ENCODE measurements at regions of chr22 and their contacts with region 1.

Region 1: GRCh38 chr22:41436322-41437113 is 10.1 kb downstream of the TOB2 start:
- DNase-seq: no peak
- H3K4me3 Mint-ChIP-seq: no peak overlapping the region
- H3K27ac Mint-ChIP-seq: peak overlapping the region; percentile 16
- H3K4me1 Mint-ChIP-seq: peaks cover 7% of the 10 kb centered on the region
- H3K27me3 Mint-ChIP-seq: no peaks in the 10 kb centered on the region

Region 2: GRCh38 chr22:41425660-41426365 is 10.7 kb before region 1 on chr22:
- CTCF ChIA-PET with region 1: interaction called, 7 read pairs
- POLR2A ChIA-PET with region 1: interaction called, 11 read pairs
- DNase-seq: peak; percentile 77
- H3K4me3 Mint-ChIP-seq: peak overlapping the region; percentile 14
- H3K27ac Mint-ChIP-seq: peak overlapping the region; percentile 82
- H3K4me1 Mint-ChIP-seq: peaks cover 14% of the 10 kb centered on the region
- H3K27me3 Mint-ChIP-seq: no peaks in the 10 kb centered on the region

Region 3: GRCh38 chr22:41902932-41903421 is 466.5 kb after region 1 on chr22:
- CTCF ChIA-PET with region 1: no interaction called
- POLR2A ChIA-PET with region 1: no interaction called
- DNase-seq: no peak
- H3K4me3 Mint-ChIP-seq: no peak overlapping the region
- H3K27ac Mint-ChIP-seq: no peak overlapping the region
- H3K4me1 Mint-ChIP-seq: peaks cover 9% of the 10 kb centered on the region
- H3K27me3 Mint-ChIP-seq: no peaks in the 10 kb centered on the region